ENCODE measurements at regions of chr2 and their contacts with region 1.

Region 1: GRCh38 chr2:29115797-29116781 is 874 bp downstream of the CLIP4 start:
- DNase-seq: peak; percentile 90
- H3K4me3 Mint-ChIP-seq: peak overlapping the region; percentile 90
- H3K27ac Mint-ChIP-seq: peak overlapping the region; percentile 87
- H3K4me1 Mint-ChIP-seq: peaks cover 52% of the 10 kb centered on the region
- H3K27me3 Mint-ChIP-seq: peaks cover 3% of the 10 kb centered on the region

Region 2: GRCh38 chr2:28870146-28870891 is 245.8 kb before region 1 on chr2 and contains the start of gene TRMT61B:
- CTCF ChIA-PET with region 1: no interaction called
- intact Hi-C with region 1: loop called (anchors 2 kb)
- DNase-seq: peak; percentile 97
- H3K4me3 Mint-ChIP-seq: peak within 1 kb of the TSS; percentile 89
- H3K27ac Mint-ChIP-seq: peak within 1 kb of the TSS; percentile 89
- H3K4me1 Mint-ChIP-seq: peaks cover 31% of the 10 kb centered on the region
- H3K27me3 Mint-ChIP-seq: no peaks in the 10 kb centered on the region
- total RNA-seq, gene TRMT61B: 13.6 to 15.5 TPM

Region 3: DNA sequence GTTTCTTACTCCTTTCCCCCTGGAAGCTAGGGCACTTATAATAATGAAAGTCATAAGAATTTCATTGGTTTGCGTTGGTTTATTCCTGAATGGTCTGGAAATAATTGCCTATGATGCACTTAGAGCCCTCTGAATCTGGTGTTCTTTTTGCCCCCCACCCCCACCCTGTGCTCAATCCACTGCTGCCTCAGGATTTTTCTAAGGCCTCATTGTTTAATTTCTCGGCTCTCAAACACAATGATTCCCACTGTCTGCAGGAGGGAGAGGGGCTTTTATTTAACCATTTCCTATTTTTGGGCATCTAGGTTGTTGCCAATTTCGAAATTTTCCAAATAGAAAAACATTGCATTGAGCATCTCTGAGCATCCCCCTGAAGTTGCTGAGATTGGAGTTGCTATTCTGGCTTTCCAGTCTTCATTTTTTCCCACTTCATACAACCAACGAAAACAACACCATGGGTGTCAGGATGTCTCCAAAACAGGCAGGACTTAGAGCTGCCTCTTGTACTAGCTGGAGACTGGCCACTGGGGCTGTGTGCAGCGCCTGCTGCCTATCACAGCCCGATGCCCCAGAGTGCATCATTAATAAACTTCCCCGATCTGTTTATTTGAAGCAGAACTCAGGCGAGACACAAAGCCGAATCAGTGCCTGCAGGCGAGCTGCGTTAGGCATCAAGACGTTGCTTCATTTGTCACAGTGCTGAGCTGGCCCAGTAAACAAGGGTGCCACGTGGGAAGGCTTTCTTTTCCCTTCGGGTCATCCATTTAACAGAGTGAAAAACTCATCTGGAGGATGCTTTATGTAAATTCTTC is 40.0 kb before region 1 on chr2:
- CTCF ChIA-PET with region 1: no interaction called
- intact Hi-C with region 1: no loop called
- DNase-seq: no peak
- H3K4me3 Mint-ChIP-seq: no peak overlapping the region
- H3K27ac Mint-ChIP-seq: no peak overlapping the region
- H3K4me1 Mint-ChIP-seq: no peaks in the 10 kb centered on the region
- H3K27me3 Mint-ChIP-seq: no peaks in the 10 kb centered on the region

Region 4: DNA sequence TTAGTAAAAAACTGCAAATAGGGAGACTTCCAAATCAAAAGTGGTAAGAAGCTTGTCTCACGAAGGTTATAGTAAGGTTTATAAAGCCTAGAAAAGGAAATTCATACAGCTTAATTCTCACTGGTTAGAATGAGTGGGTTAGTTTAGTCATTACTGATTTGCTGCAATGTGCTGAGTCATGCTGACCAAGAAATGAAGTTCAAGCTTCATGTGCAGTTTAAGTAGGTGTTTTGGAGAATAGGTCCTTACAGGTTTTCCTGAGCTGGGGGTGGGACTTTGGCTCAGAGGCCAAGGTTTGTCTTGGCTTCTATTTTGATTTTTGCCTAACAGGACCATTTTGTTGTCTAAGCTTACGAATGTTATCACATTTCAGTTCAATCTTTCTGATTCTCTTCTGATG is 14.2 kb after region 1 on chr2:
- CTCF ChIA-PET with region 1: interaction called, 8 read pairs
- intact Hi-C with region 1: loop called (anchors 1 kb)
- DNase-seq: peak; percentile 73
- H3K4me3 Mint-ChIP-seq: no peak overlapping the region
- H3K27ac Mint-ChIP-seq: peak overlapping the region; percentile 50
- H3K4me1 Mint-ChIP-seq: peaks cover 34% of the 10 kb centered on the region
- H3K27me3 Mint-ChIP-seq: no peaks in the 10 kb centered on the region

Region 5: DNA sequence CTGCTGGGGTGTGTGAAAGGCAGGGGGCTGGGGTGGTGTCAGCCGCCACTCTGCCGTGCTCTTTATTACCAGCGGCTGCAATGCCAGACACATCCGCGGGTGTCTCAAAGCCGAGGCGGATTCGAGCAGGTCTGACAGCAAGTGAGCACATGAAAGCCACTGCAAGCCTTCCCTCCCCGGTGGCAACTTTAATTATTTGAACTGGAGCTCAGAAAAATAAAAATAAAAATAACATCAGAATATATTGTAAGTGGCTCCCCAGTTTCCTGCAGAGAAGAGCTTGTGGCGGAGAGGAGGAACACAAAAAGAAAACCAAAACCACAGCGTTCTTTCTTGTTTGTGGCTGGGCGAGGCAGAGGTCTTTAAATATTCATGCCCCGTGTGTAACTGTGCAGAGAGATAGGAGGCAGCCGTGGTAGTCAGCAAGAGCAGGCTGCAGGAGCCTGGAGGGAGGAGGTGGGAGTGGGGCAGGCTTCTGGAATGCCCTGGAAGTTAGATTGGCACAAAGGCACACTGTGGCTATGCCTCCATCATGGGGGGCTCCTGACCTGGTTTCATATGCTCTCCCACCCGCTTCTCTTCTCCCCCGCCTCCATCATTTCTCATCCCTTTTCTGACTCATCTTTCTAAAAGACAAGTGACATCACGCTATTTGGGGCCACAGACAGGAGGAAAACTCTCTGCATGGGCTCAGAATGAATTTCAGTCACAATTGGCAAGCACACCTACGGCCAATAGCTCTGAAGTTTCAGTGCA is 198.9 kb after region 1 on chr2:
- CTCF ChIA-PET with region 1: no interaction called
- intact Hi-C with region 1: loop called (anchors 5 kb)
- DNase-seq: peak; percentile 76
- H3K4me3 Mint-ChIP-seq: peak overlapping the region; percentile 63
- H3K27ac Mint-ChIP-seq: peak overlapping the region; percentile 63
- H3K4me1 Mint-ChIP-seq: peaks cover 33% of the 10 kb centered on the region
- H3K27me3 Mint-ChIP-seq: peaks cover 36% of the 10 kb centered on the region

Region 6: DNA sequence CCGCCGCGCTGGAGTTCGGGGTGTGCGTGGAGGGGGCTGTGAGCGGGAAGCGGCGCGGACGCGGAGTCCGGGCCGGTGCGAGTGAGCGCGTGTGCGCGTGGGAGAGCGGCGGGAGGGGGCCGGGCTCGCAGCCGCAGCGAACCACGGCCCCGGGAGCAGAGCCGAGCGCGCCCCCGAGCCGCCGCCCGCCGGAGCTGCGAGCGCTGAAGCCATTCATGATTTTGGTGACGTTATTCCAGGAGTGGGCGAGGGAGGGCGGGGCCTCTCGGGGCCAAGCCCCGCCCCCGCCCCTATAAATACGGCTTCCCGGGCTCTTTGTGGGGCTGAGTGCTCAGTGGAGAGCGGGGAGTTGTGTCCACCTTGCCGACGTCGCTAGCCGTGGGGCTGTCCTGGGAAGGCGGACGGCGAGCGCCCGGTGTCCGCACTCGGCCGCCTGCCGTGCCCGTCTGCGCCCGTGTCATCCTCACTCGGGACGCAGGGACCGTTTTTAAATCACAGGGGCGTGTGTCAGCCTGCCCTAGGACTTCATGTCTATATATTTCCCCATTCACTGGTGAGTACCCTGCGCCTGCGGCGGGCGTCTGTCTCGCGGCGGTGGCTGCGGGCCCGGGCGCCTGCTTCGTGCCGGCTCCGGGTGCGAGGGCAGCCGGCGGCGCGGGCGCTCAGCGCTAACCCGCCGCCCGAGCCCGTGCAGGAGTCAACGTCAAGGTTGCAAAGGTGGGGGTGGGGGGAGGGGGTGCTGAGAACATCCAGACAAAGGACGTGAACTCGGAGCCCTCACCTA is 1115.3 kb after region 1 on chr2 and contains the start of gene LBH:
- CTCF ChIA-PET with region 1: no interaction called
- intact Hi-C with region 1: loop called (anchors 10 kb)
- DNase-seq: peak; percentile 90
- H3K4me3 Mint-ChIP-seq: peak within 1 kb of the TSS; percentile 83
- H3K27ac Mint-ChIP-seq: peak within 1 kb of the TSS; percentile 74
- H3K4me1 Mint-ChIP-seq: peaks cover 56% of the 10 kb centered on the region
- H3K27me3 Mint-ChIP-seq: peaks cover 3% of the 10 kb centered on the region
- total RNA-seq, gene LBH: 71.4 to 75.3 TPM